AG04449 (cell line): ENCODE measurements at regions of chr1 and their contacts with region 1.

Region 1: GRCh38 chr1:22673486-22674409 is 20.7 kb downstream of the C1QB start:
- DNase-seq: peak; percentile 7
- H3K4me3 ChIP-seq: no peak overlapping the region
- CTCF ChIP-seq: peak; percentile 75

Region 2: GRCh38 chr1:22689505-22689904 is 15.8 kb after region 1 on chr1:
- CTCF ChIA-PET with region 1: interaction called, 16 read pairs
- POLR2A ChIA-PET with region 1: no interaction called
- DNase-seq: peak; percentile 61
- H3K4me3 ChIP-seq: no peak overlapping the region
- CTCF ChIP-seq: no peak

Region 3: GRCh38 chr1:22963044-22963677 is 289.4 kb after region 1 on chr1:
- CTCF ChIA-PET with region 1: interaction called, 96 read pairs
- POLR2A ChIA-PET with region 1: no interaction called
- DNase-seq: no peak
- H3K4me3 ChIP-seq: no peak overlapping the region
- CTCF ChIP-seq: no peak